Activated naive CD4-positive, alpha-beta T cell treated with anti-CD3 and anti-CD28 coated beads, Interleukin-2, amount 10 ng/mL, durations not matched to agents 7 days and 5 days (primary cell): ENCODE measurements at regions of chr18 and their contacts with region 1.

Region 1: DNA sequence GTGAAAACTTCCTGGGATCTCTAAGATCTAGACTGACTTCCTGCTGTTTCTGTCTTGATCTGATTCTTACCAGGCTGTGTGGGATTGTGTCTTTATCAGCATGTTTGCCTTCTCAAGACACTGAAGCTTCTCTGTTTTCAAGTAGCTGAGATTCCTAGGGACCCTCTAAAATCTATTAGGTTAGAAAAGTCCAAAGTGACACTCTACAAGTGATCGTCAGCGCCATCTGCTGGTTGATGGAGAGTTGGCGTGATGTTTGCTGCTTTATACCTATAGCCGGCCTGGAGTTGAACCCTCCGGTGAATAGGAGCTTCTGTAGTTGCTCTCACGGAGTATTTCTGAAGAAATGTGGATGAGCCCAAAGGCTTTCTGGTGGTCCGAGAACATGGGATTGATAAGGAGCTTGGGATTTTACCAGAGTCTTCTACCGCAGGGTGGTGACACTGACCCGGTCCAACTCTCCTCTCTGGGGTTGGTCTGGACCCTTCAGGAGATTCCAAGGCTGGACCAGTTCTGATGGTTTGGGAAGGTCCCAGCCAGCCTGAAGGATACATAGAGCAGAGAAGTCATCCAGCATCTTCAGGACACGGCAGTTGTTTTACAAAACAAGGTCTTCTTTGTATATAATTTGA is 96.0 kb upstream of the TTC39C start:
- DNase-seq: peak; percentile 85
- H3K4me3 Mint-ChIP-seq: no peak overlapping the region
- H3K27ac Mint-ChIP-seq: no peak overlapping the region
- H3K4me1 Mint-ChIP-seq: peaks cover 37% of the 10 kb centered on the region
- H3K27me3 Mint-ChIP-seq: peaks cover 11% of the 10 kb centered on the region

Region 2: GRCh38 chr18:23812546-23813440 is 105.7 kb before region 1 on chr18:
- CTCF ChIA-PET with region 1: interaction called, 13 read pairs
- DNase-seq: no peak
- H3K4me3 Mint-ChIP-seq: no peak overlapping the region
- H3K27ac Mint-ChIP-seq: no peak overlapping the region
- H3K4me1 Mint-ChIP-seq: peaks cover 26% of the 10 kb centered on the region
- H3K27me3 Mint-ChIP-seq: peaks cover 45% of the 10 kb centered on the region

Region 3: DNA sequence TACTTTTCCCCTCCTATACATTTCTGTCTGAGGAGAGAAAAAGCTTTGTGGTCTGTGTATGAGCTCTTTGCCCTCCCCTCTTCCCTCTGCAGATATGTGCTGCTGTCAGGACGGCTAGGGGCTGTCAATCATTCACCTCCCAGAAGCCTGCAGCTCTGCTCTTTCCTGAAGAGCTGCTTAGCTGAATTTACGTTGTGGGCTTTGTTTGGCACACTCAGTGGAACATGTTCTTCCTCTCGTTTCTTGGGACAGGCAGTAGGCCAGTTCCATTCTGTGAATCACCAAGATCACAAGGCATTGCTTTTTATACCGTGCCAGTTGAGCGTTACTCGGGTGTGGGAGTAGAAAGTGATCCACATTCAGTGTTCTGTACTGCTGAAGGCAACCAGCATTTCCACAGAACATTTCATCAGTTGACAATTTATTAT is 92.5 kb before region 1 on chr18:
- CTCF ChIA-PET with region 1: interaction called, 41 read pairs
- DNase-seq: no peak
- H3K4me3 Mint-ChIP-seq: no peak overlapping the region
- H3K27ac Mint-ChIP-seq: no peak overlapping the region
- H3K4me1 Mint-ChIP-seq: peaks cover 34% of the 10 kb centered on the region
- H3K27me3 Mint-ChIP-seq: peaks cover 12% of the 10 kb centered on the region

Region 4: GRCh38 chr18:23903971-23904370 is 14.5 kb before region 1 on chr18:
- CTCF ChIA-PET with region 1: interaction called, 10 read pairs
- DNase-seq: no peak
- H3K4me3 Mint-ChIP-seq: no peak overlapping the region
- H3K27ac Mint-ChIP-seq: no peak overlapping the region
- H3K4me1 Mint-ChIP-seq: peaks cover 6% of the 10 kb centered on the region
- H3K27me3 Mint-ChIP-seq: peaks cover 17% of the 10 kb centered on the region

Region 5: DNA sequence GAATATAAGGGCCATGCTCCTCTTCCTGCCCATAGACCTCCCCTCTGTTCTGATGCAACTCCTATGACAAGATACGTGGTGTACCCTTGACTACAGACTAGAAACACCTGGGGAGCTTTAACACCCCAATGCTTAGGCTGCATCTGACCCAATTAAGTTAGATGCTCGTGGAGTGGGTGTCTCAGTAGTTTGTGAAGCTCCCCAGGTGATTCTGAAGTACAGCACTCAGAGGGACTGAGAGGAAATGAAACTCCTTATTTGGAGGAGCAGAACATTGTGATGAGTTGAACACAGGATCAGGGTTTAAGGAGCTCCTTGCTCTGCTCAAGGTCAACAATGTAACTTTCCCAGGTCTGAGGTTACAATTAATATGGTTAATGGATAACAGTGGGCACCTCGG is 15.7 kb after region 1 on chr18:
- CTCF ChIA-PET with region 1: interaction called, 26 read pairs
- DNase-seq: no peak
- H3K4me3 Mint-ChIP-seq: no peak overlapping the region
- H3K27ac Mint-ChIP-seq: peak overlapping the region; percentile 83
- H3K4me1 Mint-ChIP-seq: peaks cover 85% of the 10 kb centered on the region
- H3K27me3 Mint-ChIP-seq: peaks cover 3% of the 10 kb centered on the region

Region 6: GRCh38 chr18:24118750-24119577 is 200.4 kb after region 1 on chr18:
- CTCF ChIA-PET with region 1: interaction called, 13 read pairs
- DNase-seq: peak; percentile 85
- H3K4me3 Mint-ChIP-seq: no peak overlapping the region
- H3K27ac Mint-ChIP-seq: no peak overlapping the region
- H3K4me1 Mint-ChIP-seq: peaks cover 22% of the 10 kb centered on the region
- H3K27me3 Mint-ChIP-seq: no peaks in the 10 kb centered on the region

Region 7: GRCh38 chr18:24231773-24232735 is 313.5 kb after region 1 on chr18:
- CTCF ChIA-PET with region 1: no interaction called
- DNase-seq: no peak
- H3K4me3 Mint-ChIP-seq: no peak overlapping the region
- H3K27ac Mint-ChIP-seq: no peak overlapping the region
- H3K4me1 Mint-ChIP-seq: no peaks in the 10 kb centered on the region
- H3K27me3 Mint-ChIP-seq: peaks cover 6% of the 10 kb centered on the region

Region 8: GRCh38 chr18:24465486-24465885 is 547.0 kb after region 1 on chr18:
- CTCF ChIA-PET with region 1: no interaction called
- DNase-seq: no peak
- H3K4me3 Mint-ChIP-seq: no peak overlapping the region
- H3K27ac Mint-ChIP-seq: no peak overlapping the region
- H3K4me1 Mint-ChIP-seq: peaks cover 12% of the 10 kb centered on the region
- H3K27me3 Mint-ChIP-seq: peaks cover 9% of the 10 kb centered on the region